ENCODE measurements at regions of chr11 and their contacts with region 1.

Region 1: DNA sequence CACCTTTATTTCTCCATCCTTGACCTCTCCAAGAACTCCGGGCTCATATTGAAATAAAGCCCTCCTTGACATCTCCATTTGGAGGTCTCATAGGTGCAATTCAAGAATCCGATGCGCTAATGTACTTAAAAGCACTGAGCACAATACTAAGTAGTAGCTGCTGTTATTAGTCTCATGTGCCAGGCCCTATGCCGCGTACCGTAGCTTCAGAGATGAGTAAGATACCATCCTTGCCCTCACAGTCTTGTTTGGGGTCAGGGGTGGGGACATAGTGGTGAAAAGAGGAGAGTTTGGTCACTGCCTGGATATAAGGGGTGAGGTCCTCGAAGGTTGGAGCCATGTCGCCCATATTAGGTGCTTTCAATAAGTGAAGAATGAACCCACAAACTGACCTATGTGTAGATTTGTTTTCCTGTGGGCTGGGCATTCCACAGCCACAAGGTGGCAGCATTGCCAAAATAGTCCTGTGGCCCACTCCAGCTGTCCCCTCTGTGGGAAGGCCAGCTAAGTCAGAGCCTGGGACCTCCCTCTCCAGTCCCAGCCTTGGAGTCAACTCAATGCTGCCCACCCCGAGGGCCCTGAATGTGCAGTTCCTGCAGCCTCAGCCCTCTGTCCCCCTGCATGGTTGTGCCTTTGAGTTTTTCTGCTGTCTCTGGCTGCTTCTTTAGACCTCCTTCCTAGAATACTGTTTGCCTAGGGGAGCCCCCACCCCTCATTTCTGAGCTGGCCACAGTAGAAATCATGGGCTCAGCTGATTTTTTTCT is 6.5 kb downstream of the DCPS start:
- DNase-seq: peak; percentile 81
- H3K4me3 ChIP-seq: no peak overlapping the region; a peak in 1 of 4 replicates
- H3K27ac ChIP-seq: no peak overlapping the region
- H3K4me1 ChIP-seq: peaks cover 4% of the 10 kb centered on the region in 2 experiments; a peak in 2 of 4 replicates
- H3K27me3 ChIP-seq: no peaks in the 10 kb centered on the region
- CTCF ChIP-seq: peak; percentile 93
- EP300 ChIP-seq: no peak
- RAD21 ChIP-seq: peak; percentile 98

Region 2: GRCh38 chr11:125679397-125679796 is 631.0 kb before region 1 on chr11:
- CTCF ChIA-PET with region 1: no interaction called
- POLR2A ChIA-PET with region 1: no interaction called
- DNase-seq: no peak
- H3K4me3 ChIP-seq: no peak overlapping the region
- H3K27ac ChIP-seq: no peak overlapping the region
- H3K4me1 ChIP-seq: no peaks in the 10 kb centered on the region
- H3K27me3 ChIP-seq: no peaks in the 10 kb centered on the region
- CTCF ChIP-seq: peak; percentile 48
- EP300 ChIP-seq: no peak
- RAD21 ChIP-seq: no peak

Region 3: DNA sequence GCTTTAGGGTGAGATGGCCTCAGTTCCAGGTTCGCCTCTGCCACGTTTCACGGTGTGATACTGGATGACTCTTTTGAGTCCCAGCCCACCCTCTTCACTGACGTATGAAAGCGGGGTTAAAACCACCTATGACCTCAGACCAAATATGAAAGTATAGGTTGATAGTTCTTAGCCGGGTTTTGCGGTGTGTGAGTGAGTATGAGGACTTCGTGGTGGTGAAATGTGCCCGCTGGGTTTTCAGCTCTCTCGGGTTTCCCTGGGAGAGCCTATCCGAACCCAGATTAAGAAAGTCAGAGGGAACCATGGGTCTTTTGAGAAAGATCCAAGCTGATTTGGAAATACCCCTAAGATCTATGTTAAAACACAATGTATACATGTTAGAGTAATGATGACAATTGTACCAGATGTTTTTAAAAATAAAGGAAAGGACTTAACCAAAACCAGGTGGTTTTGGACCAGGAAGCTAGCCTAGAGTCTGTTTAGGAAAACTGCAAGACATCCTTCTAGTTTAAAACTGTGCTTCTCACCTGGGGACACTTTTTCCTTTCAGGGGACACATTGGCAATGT is 19.3 kb after region 1 on chr11:
- CTCF ChIA-PET with region 1: interaction called, 18 read pairs
- POLR2A ChIA-PET with region 1: interaction called, 3 read pairs
- DNase-seq: no peak
- H3K4me3 ChIP-seq: no peak overlapping the region
- H3K27ac ChIP-seq: no peak overlapping the region
- H3K4me1 ChIP-seq: peaks cover 19 to 26% of the 10 kb centered on the region in 2 experiments; a peak in 3 of 4 replicates
- H3K27me3 ChIP-seq: no peaks in the 10 kb centered on the region
- CTCF ChIP-seq: no peak
- EP300 ChIP-seq: no peak
- RAD21 ChIP-seq: no peak

Region 4: GRCh38 chr11:126391970-126392639 is 81.7 kb after region 1 on chr11:
- CTCF ChIA-PET with region 1: interaction called, 11 read pairs
- POLR2A ChIA-PET with region 1: no interaction called
- DNase-seq: no peak
- H3K4me3 ChIP-seq: no peak overlapping the region
- H3K27ac ChIP-seq: peak overlapping the region in 1 of 2 experiments; percentile 39; a peak in 1 of 4 replicates
- H3K4me1 ChIP-seq: peaks cover 0 to 49% of the 10 kb centered on the region in 2 experiments; a peak in 1 of 4 replicates
- H3K27me3 ChIP-seq: no peaks in the 10 kb centered on the region
- CTCF ChIP-seq: peak; percentile 26; the same call in 1 of the 2 replicates
- EP300 ChIP-seq: no peak
- RAD21 ChIP-seq: peak; percentile 46

Region 5: GRCh38 chr11:126419801-126420697 is 109.6 kb after region 1 on chr11:
- CTCF ChIA-PET with region 1: interaction called, 14 read pairs
- POLR2A ChIA-PET with region 1: no interaction called
- DNase-seq: no peak
- H3K4me3 ChIP-seq: no peak overlapping the region
- H3K27ac ChIP-seq: no peak overlapping the region
- H3K4me1 ChIP-seq: peaks cover 0 to 3% of the 10 kb centered on the region in 2 experiments; a peak in 1 of 4 replicates
- H3K27me3 ChIP-seq: no peaks in the 10 kb centered on the region
- CTCF ChIP-seq: no peak
- EP300 ChIP-seq: no peak
- RAD21 ChIP-seq: no peak

Region 6: GRCh38 chr11:126431401-126432064 is 121.1 kb after region 1 on chr11:
- CTCF ChIA-PET with region 1: interaction called, 41 read pairs
- POLR2A ChIA-PET with region 1: no interaction called
- DNase-seq: no peak
- H3K4me3 ChIP-seq: no peak overlapping the region
- H3K27ac ChIP-seq: peak overlapping the region; percentile 40 to 79; a peak in 3 of 4 replicates
- H3K4me1 ChIP-seq: peaks cover 0 to 14% of the 10 kb centered on the region in 2 experiments; a peak in 3 of 4 replicates
- H3K27me3 ChIP-seq: no peaks in the 10 kb centered on the region
- CTCF ChIP-seq: no peak
- EP300 ChIP-seq: no peak; a peak in 1 of 4 replicates
- RAD21 ChIP-seq: no peak

Region 7: DNA sequence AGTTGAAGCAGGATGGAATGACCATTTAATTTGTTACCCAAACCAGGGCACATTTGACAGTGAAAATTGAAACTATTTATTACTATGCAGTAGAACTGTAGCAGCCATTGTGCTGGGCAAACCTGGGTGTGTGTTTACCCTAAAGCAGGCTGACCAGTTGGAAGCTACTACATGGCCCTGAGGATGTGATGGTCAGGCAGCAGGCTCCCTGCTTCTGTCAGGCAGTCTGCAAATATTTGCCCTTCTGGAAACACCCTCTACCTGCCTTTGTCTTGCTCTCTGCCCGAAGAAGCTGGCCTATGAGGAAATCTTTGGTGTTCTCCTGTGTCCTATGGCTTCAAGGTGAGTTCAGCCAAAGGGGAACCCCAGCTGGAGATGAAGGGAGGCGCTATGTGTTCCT is 1290.3 kb after region 1 on chr11:
- CTCF ChIA-PET with region 1: no interaction called
- POLR2A ChIA-PET with region 1: no interaction called
- DNase-seq: no peak
- H3K4me3 ChIP-seq: no peak overlapping the region
- H3K27ac ChIP-seq: no peak overlapping the region
- H3K4me1 ChIP-seq: peaks cover 0 to 2% of the 10 kb centered on the region in 2 experiments; a peak in 1 of 4 replicates
- H3K27me3 ChIP-seq: no peaks in the 10 kb centered on the region
- CTCF ChIP-seq: no peak
- EP300 ChIP-seq: no peak
- RAD21 ChIP-seq: no peak